Gastrocnemius medialis (tissue), 4 donors: ENCODE measurements at regions of chr17 and their contacts with region 1.

Region 1: GRCh38 chr17:39209317-39210092 is 9.4 kb downstream of the RPL19 start:
- DNase-seq: peak; percentile 88
- ATAC-seq: peak; percentile 79 to 89
- H3K4me3 ChIP-seq: peak overlapping the region; percentile 45 to 69 (median 54)
- H3K27ac ChIP-seq: peak overlapping the region; percentile 86 to 94 (median 88)
- H3K4me1 ChIP-seq: peaks cover 21 to 27% of the 10 kb centered on the region in 2 donors
- H3K27me3 ChIP-seq: no peaks in the 10 kb centered on the region
- CTCF ChIP-seq: no peak
- POLR2A ChIP-seq: peak; percentile 61 to 68

Region 2: DNA sequence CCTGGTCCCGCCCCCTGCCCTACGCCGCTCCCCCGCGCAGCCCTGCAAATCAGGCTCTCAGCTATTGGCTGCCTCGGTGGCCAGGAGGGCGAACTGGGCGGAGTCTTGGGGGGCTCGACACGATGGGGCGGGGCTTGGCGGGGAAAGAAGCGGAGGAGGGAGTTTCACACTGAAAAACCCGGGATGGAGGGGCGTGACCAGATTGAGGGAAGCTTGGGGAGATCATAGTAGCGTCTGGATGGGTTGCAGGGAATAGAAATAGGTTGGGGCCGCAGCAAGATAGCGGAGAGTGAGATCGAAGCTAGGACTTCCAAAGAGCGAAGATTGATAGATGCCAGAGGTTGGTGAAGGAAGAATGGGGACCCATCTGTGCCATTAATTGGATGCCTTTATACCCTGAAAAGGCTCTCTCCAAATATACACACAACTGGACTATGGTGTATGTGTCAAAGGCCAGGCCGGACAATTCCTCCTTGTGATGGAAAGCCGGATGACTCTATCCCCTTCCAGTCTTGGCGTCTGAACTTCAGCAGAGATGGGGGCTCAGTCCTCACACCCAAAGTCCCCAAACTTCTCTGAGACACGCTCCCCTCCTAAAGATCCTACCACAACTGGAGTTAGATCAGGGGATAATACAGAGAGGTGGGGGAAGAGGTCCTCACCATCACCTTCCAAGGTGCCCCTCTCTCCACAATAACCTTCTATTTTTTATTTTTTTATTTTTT is 16.6 kb after region 1 on chr17:
- in situ Hi-C with region 1: no loop called
- intact Hi-C with region 1: loop called (anchors 2 kb)
- DNase-seq: no peak
- ATAC-seq: no peak
- H3K4me3 ChIP-seq: peak overlapping the region; percentile 36 to 51 (median 47)
- H3K27ac ChIP-seq: no peak overlapping the region
- H3K4me1 ChIP-seq: peaks cover 22 to 26% of the 10 kb centered on the region in 2 donors
- H3K27me3 ChIP-seq: peaks cover 12 to 23% (median 16%) of the 10 kb centered on the region in 3 donors
- CTCF ChIP-seq: no peak
- POLR2A ChIP-seq: no peak

Region 3: DNA sequence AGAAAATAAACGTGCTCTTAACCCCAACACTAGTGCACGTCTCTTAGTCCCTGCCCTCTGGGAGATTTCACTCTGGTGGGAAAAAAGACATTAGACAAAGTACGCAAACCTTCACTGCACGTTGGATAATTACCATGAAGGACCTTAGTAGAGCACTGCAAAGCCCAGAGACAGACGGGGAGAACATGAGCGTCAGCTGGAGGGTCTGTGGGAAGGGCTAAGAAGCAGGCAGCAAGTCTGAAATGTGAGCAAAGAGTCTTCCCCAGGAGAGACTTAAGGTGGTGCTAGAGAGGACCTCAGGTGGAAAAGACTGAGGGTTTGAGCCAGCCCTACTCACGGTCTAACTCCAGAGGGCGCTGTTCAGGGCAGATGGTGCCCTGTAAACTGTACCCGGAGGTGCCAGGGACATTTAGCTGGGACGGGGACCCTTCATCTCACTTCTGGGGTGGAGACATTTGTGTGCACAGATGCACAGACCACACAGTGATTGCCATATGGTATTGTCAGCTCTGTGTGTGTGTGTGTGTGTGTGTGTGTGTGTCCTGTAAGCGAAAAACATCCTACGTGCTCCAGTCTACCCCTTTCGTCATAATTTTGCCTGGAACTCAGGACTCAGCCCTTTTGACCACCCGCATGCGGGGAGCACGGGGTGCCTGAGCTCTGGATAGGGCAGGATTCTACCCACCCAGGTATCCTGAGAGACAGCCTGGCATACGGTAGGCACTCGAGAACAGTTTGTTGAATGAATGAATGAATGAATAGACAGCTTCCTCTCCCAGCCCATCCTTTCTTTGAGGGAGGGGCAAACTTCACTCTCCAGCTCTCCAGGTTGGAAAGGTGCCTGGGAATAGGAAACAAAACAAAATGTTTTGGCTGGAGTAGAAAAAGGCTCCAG is 26.3 kb after region 1 on chr17:
- in situ Hi-C with region 1: loop called in 1 of 4 experiments (anchors 5 kb)
- intact Hi-C with region 1: loop called (anchors 1 kb)
- DNase-seq: no peak
- ATAC-seq: peak; percentile 41 to 72
- H3K4me3 ChIP-seq: no peak overlapping the region
- H3K27ac ChIP-seq: no peak overlapping the region
- H3K4me1 ChIP-seq: peaks cover 7 to 14% of the 10 kb centered on the region in 2 donors
- H3K27me3 ChIP-seq: peaks cover 0 to 2% (median 0%) of the 10 kb centered on the region in 3 donors
- CTCF ChIP-seq: peak; percentile 41 to 70 (median 49)
- POLR2A ChIP-seq: no peak

Region 4: GRCh38 chr17:39244600-39245570 is 35.4 kb after region 1 on chr17:
- in situ Hi-C with region 1: loop called in 3 of 4 experiments (anchors 5 kb)
- intact Hi-C with region 1: loop called (anchors 1 kb)
- DNase-seq: peak; percentile 70 to 81
- ATAC-seq: peak; percentile 82 to 91
- H3K4me3 ChIP-seq: no peak overlapping the region
- H3K27ac ChIP-seq: no peak overlapping the region
- H3K4me1 ChIP-seq: peaks cover 0 to 6% of the 10 kb centered on the region in 2 donors
- H3K27me3 ChIP-seq: no peaks in the 10 kb centered on the region
- CTCF ChIP-seq: peak; percentile 74 to 98 (median 95)
- POLR2A ChIP-seq: no peak

Region 5: DNA sequence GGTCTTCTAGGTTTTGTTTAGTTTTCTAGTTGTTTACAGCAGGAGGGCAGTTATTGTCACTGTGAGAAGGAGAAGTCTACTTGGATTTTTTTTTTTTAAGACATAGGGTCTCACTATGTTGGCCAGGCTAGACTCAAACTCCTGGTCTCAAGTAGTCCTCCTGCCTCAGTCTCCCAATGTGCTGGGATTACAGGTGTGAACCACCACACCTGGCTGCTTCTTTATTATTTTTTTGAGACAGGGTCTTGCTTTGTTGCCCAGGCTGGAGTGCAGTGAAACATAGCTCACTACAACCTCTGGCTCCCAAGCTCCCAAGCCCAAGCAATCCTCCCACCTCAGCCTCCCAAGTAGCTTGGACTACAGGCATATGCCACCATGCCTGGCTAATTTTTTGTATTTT is 84.6 kb after region 1 on chr17:
- in situ Hi-C with region 1: no loop called
- intact Hi-C with region 1: no loop called
- DNase-seq: no peak
- ATAC-seq: no peak
- H3K4me3 ChIP-seq: no peak overlapping the region
- H3K27ac ChIP-seq: no peak overlapping the region
- H3K4me1 ChIP-seq: no peaks in the 10 kb centered on the region
- H3K27me3 ChIP-seq: no peaks in the 10 kb centered on the region
- CTCF ChIP-seq: no peak
- POLR2A ChIP-seq: no peak